Activated T-helper 1 cell treated with anti-CD3 and anti-CD28 coated beads, Interleukin-12 subunit alpha, Interleukin-12 subunit beta, Interleukin-2, Interleukin-4 antibody, amounts not matched to agents 30 ng/mL and 10 ng/mL and 1 ng/mL, durations not matched to agents 14 hours and 24 hours and 36 hours (primary cell): ENCODE measurements at regions of chr11 and their contacts with region 1.

Region 1: GRCh38 chr11:117226388-117227385 is 5.2 kb downstream of the PCSK7 start:
- DNase-seq: peak; percentile 14
- H3K4me3 Mint-ChIP-seq: no peak overlapping the region
- H3K27ac Mint-ChIP-seq: peak overlapping the region; percentile 31
- H3K4me1 Mint-ChIP-seq: peaks cover 36% of the 10 kb centered on the region
- H3K27me3 Mint-ChIP-seq: no peaks in the 10 kb centered on the region

Region 2: DNA sequence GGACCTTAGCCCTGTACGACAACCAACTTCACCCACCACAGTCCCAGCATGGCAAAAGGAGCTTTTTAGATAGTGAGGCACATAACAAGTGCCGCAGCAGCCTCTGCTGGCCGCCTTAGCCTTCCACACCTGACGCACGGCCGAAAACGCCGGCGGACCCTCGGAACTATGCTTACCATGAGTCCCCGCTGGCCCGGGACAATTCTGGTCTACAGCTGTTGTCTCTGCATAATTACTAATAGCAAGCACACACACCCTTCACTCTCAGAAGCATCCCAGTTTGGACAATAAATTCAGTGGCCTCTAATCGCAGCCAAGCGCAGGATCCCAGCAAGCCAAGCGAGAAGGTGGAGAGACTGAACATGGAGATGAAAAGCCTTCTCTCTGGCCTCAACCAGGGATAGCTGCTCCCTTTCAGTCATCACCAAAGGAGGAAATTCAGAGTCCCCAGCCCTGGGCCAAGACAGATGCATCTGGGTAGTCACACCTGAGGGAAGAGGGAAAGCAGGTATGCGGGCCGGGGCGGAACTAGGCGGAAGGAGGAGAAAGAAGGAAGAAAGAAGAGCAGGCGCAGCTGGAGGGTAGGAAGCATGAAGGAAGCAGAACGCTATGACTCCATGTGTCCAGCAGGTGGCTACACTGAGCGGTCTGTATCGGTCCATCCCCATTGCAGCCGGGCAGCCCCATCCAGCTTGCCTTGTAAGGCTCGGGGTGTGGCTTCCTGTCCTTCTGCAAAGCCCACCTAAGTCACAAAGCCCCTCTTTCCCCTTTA is 494.2 kb before region 1 on chr11:
- intact Hi-C with region 1: loop called (anchors 1 kb)
- DNase-seq: peak; percentile 31
- H3K4me3 Mint-ChIP-seq: no peak overlapping the region
- H3K27ac Mint-ChIP-seq: no peak overlapping the region
- H3K4me1 Mint-ChIP-seq: peaks cover 12% of the 10 kb centered on the region
- H3K27me3 Mint-ChIP-seq: no peaks in the 10 kb centered on the region

Region 3: GRCh38 chr11:116879800-116880625 is 346.7 kb before region 1 on chr11:
- intact Hi-C with region 1: loop called (anchors 2 kb)
- DNase-seq: no peak
- H3K4me3 Mint-ChIP-seq: no peak overlapping the region
- H3K27ac Mint-ChIP-seq: peak overlapping the region; percentile 66
- H3K4me1 Mint-ChIP-seq: peaks cover 25% of the 10 kb centered on the region
- H3K27me3 Mint-ChIP-seq: no peaks in the 10 kb centered on the region

Region 4: GRCh38 chr11:117178210-117179034 is 48.3 kb before region 1 on chr11 and contains the start of gene SIDT2:
- intact Hi-C with region 1: loop called (anchors 1 kb)
- DNase-seq: peak; percentile 89
- H3K4me3 Mint-ChIP-seq: peak within 1 kb of the TSS; percentile 95
- H3K27ac Mint-ChIP-seq: peak within 1 kb of the TSS; percentile 86
- H3K4me1 Mint-ChIP-seq: peaks cover 33% of the 10 kb centered on the region
- H3K27me3 Mint-ChIP-seq: no peaks in the 10 kb centered on the region
- total RNA-seq, gene SIDT2: 24.3 and 32.2 TPM in 2 replicates